ENCODE measurements at regions of chr1 and their contacts with region 1.

Region 1: GRCh38 chr1:207745285-207745684 is 6.6 kb upstream of the CD46 start:
- DNase-seq: peak; percentile 90
- ATAC-seq: peak; percentile 23
- H3K4me3 ChIP-seq: no peak overlapping the region
- H3K27ac ChIP-seq: no peak overlapping the region
- H3K4me1 ChIP-seq: peaks cover 48% of the 10 kb centered on the region
- H3K27me3 ChIP-seq: no peaks in the 10 kb centered on the region
- CTCF ChIP-seq: no peak

Region 2: GRCh38 chr1:207711285-207711684 is 34.0 kb before region 1 on chr1:
- CTCF ChIA-PET with region 1: no interaction called
- POLR2A ChIA-PET with region 1: no interaction called
- intact Hi-C with region 1: loop called (anchors 2 kb)
- DNase-seq: peak; percentile 69
- ATAC-seq: peak; percentile 70
- H3K4me3 ChIP-seq: no peak overlapping the region
- H3K27ac ChIP-seq: no peak overlapping the region
- H3K4me1 ChIP-seq: peaks cover 25% of the 10 kb centered on the region
- H3K27me3 ChIP-seq: no peaks in the 10 kb centered on the region
- CTCF ChIP-seq: peak; percentile 55